H1 (cell line): ENCODE measurements at regions of chr14 and their contacts with region 1.

Region 1: GRCh38 chr14:77053046-77053841 is 24.7 kb upstream of the IRF2BPL start:
- DNase-seq: peak; percentile 70 to 93
- H3K4me3 ChIP-seq: no peak overlapping the region
- H3K27ac ChIP-seq: no peak overlapping the region
- H3K4me1 ChIP-seq: peaks cover 0 to 12% (median 7%) of the 10 kb centered on the region in 4 experiments; a peak in 5 of 7 replicates
- H3K27me3 ChIP-seq: no peaks in the 10 kb centered on the region
- CTCF ChIP-seq: peak; percentile 89 to 98 (median 98)
- EP300 ChIP-seq: peak in 1 of 2 experiments; percentile 70; a peak in 1 of 3 replicates
- POLR2A ChIP-seq: no peak
- RAD21 ChIP-seq: peak; percentile 97 to 99

Region 2: DNA sequence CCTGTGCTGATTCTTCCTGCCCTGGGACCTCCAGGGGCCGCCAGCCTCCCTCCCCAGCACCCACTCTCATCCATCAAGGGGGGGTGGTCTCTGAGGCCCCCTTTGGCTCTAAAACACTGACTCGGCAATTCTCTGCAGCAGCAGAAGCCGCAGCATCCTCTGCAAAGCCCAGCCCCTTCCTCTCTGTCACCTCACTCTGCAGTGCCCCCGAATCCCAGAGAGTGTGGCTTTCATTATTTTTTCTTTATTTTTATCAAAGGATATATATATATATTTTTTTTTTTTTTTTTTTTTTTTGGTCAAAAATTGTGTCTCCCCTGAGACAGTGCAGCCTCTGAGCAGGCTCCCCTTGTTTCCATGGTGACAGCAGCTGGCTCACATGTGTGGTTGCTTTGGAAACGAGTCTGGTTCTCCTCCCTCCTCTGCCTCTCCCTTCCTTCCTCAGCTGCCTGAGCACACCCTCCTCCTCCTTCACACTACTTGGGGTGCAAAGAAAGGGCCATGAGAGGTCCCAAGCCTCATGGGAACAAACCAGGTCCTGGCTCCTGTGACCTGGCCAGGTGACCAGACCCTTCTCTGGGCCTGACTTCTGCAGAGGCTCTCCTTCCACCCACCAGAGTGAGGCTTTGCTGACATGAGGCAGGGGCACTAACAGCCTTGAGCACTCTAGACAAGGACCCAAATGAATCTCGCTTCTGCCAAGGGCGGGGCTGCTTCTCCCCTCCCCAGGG is 126.6 kb before region 1 on chr14:
- CTCF ChIA-PET with region 1: interaction called, 237 read pairs
- POLR2A ChIA-PET with region 1: no interaction called
- DNase-seq: no peak
- H3K4me3 ChIP-seq: no peak overlapping the region
- H3K27ac ChIP-seq: no peak overlapping the region
- H3K4me1 ChIP-seq: peaks cover 15 to 48% (median 33%) of the 10 kb centered on the region in 4 experiments
- H3K27me3 ChIP-seq: no peaks in the 10 kb centered on the region
- CTCF ChIP-seq: no peak
- EP300 ChIP-seq: no peak
- POLR2A ChIP-seq: no peak
- RAD21 ChIP-seq: 0 out of 4 replicates have a peak, but pooled peaks of 1 of the 2 experiments have one; percentile 10

Region 3: DNA sequence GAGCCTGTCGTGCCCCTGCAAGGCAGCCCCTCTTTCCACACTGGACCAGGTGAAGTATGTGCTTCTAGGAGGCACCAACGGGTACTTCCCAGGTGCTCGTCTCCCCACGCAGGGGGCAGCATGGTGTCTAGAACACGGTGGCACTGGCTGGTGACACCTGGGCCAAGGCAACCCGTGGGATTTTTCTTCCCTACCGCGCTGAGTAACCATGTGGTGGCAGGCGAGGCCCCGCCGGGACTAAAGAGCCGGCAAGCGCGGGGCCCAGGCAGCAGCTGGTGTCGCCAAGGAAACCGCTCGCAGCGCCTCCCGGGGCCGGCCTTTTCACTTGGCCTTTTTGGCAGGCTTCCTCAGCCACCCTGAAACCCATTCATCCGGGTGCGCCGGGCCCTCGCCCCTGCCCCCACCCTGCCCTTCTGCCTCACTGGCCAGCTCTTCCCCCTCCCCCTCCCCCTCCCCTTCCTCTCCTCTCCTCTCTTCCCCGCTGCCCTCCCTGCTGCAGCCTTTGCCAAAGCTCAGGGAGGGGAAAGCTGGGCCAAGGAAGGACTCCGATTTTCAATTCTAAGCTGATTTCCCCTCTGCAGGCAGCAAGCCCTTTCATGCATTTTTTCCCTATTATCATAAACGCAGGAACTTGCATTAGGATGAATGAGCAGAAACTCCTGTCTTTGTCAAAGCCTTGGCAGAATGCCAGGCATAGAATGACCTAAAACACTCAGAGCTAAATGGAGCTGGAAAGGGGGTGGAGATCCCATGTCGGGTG is 106.0 kb before region 1 on chr14:
- CTCF ChIA-PET with region 1: interaction called, 18 read pairs
- POLR2A ChIA-PET with region 1: no interaction called
- DNase-seq: peak; percentile 84 to 93
- H3K4me3 ChIP-seq: peak overlapping the region in 3 of 4 experiments; percentile 20 to 45 (median 27); a peak in 5 of 8 replicates
- H3K27ac ChIP-seq: peak overlapping the region; percentile 71
- H3K4me1 ChIP-seq: peaks cover 16 to 20% (median 19%) of the 10 kb centered on the region in 4 experiments
- H3K27me3 ChIP-seq: no peaks in the 10 kb centered on the region
- CTCF ChIP-seq: peak; percentile 35 to 42 (median 38)
- EP300 ChIP-seq: peak in 1 of 2 experiments; percentile 41; a peak in 1 of 3 replicates
- POLR2A ChIP-seq: no peak
- RAD21 ChIP-seq: peak; percentile 53 to 67

Region 4: GRCh38 chr14:76968621-76969063 is 84.6 kb before region 1 on chr14:
- CTCF ChIA-PET with region 1: interaction called, 10 read pairs
- POLR2A ChIA-PET with region 1: no interaction called
- DNase-seq: no peak
- H3K4me3 ChIP-seq: no peak overlapping the region
- H3K27ac ChIP-seq: peak overlapping the region; percentile 56; the same call in 1 of the 2 replicates
- H3K4me1 ChIP-seq: peaks cover 0 to 33% (median 17%) of the 10 kb centered on the region in 4 experiments; a peak in 6 of 7 replicates
- H3K27me3 ChIP-seq: no peaks in the 10 kb centered on the region
- CTCF ChIP-seq: peak in 2 of 3 experiments; percentile 23 to 25; a peak in 2 of 4 replicates
- EP300 ChIP-seq: no peak
- POLR2A ChIP-seq: no peak
- RAD21 ChIP-seq: peak; percentile 26 to 41; a peak in 3 of 4 replicates

Region 5: GRCh38 chr14:77023001-77023996 is 29.9 kb before region 1 on chr14:
- CTCF ChIA-PET with region 1: interaction called, 14 read pairs
- POLR2A ChIA-PET with region 1: interaction called, 4 read pairs
- DNase-seq: peak in 1 of 2 experiments; percentile 51
- H3K4me3 ChIP-seq: peak overlapping the region in 1 of 4 experiments; percentile 86; a peak in 4 of 8 replicates
- H3K27ac ChIP-seq: peak overlapping the region; percentile 35; the same call in 1 of the 2 replicates
- H3K4me1 ChIP-seq: peaks cover 12 to 26% (median 19%) of the 10 kb centered on the region in 4 experiments
- H3K27me3 ChIP-seq: peaks cover 0 to 5% (median 3%) of the 10 kb centered on the region in 4 experiments; a peak in 5 of 7 replicates
- CTCF ChIP-seq: peak in 2 of 3 experiments; percentile 18 to 42; a peak in 3 of 4 replicates
- EP300 ChIP-seq: no peak
- POLR2A ChIP-seq: no peak; a peak in 1 of 3 replicates
- RAD21 ChIP-seq: peak; percentile 47 to 53

Region 6: DNA sequence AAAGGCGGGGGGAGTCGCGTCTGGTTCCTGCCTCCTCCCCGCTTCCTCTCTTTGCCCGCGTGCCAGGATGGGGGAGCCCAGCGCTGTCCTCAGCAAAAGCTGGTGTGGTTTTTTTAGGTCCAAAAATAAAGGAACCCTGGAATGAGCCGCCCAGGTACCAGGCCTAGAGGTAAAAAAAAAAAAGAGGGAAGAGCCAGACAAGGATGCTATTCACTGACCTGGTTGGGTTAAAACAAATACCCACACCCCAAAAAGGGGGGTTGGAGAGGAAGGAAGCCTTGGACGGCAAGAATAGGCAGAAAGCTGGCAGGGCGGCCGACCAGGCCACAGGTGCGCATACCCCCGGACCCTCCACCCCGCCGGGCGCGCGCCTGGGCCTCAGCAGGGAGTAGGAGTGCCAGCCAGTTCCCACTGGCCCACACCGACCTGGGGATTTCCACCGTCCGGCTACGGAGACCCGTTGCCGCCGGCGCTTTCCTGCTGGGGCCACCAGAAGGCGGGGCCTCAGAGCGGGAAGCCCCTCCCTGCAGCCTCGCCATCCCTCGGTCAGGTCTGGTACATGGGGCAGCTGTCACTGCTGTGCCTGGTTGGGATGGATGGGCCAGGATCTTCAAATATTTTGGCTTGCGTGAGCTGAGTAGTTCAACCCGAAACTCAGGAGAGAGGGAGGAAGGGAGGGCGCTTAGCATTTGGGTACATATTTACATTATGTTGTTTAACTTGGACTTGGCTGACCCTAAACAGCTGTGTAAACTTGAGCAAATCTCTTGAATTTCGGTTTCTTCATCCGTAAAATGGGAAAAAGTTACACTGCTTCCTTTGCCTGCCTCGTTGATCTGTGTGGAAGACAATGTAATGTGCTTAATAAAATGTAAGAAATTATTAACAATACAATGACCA is 19.4 kb before region 1 on chr14:
- CTCF ChIA-PET with region 1: interaction called, 76 read pairs
- POLR2A ChIA-PET with region 1: interaction called, 3 read pairs
- DNase-seq: peak in 1 of 2 experiments; percentile 90
- H3K4me3 ChIP-seq: peak overlapping the region; percentile 28 to 60 (median 42)
- H3K27ac ChIP-seq: peak overlapping the region; percentile 92
- H3K4me1 ChIP-seq: peaks cover 22 to 49% (median 34%) of the 10 kb centered on the region in 4 experiments
- H3K27me3 ChIP-seq: peaks cover 0 to 4% (median 2%) of the 10 kb centered on the region in 4 experiments; a peak in 2 of 7 replicates
- CTCF ChIP-seq: no peak
- EP300 ChIP-seq: peak in 1 of 2 experiments; percentile 83; a peak in 1 of 3 replicates
- POLR2A ChIP-seq: peak in 1 of 2 experiments; percentile 79; a peak in 1 of 3 replicates
- RAD21 ChIP-seq: no peak; a peak in 1 of 4 replicates

Region 7: DNA sequence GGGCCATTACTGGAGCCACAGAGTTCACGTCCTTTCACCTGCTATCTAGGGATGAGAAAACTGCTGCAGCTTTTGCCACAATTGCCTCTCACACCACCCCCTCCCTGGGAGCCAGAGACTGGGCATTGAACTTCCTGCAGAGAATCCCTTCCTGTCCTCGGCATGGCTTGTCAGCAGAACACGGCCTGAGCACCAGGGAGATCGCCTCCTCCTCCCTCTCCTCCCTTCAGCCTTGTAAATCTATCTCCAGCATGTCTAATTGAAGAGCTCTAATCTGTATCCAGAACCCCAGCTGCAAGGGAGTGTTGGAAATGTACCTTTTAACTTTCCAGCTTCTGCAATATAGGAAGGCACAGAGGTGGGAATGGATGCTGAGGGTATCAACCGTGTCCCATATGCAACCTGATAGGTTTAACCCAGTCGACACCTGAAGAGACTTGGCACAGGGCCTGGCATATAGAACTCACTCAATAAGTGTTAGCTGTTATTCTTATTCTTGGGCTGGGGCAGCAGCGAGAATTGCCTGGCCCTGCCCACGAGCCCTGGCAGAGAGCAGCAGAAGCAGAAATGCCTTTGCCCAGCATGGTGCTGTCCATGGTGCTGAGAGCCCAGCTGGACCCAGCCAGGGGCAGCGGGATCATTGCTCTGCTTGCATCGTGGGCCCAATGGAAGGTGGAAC is 155.2 kb after region 1 on chr14:
- CTCF ChIA-PET with region 1: no interaction called
- POLR2A ChIA-PET with region 1: no interaction called
- DNase-seq: peak; percentile 57 to 91
- H3K4me3 ChIP-seq: no peak overlapping the region
- H3K27ac ChIP-seq: no peak overlapping the region
- H3K4me1 ChIP-seq: peaks cover 2 to 13% (median 8%) of the 10 kb centered on the region in 4 experiments
- H3K27me3 ChIP-seq: no peaks in the 10 kb centered on the region
- CTCF ChIP-seq: no peak
- EP300 ChIP-seq: no peak
- POLR2A ChIP-seq: no peak
- RAD21 ChIP-seq: peak in 1 of 2 experiments; percentile 21; a peak in 1 of 4 replicates